Caco-2 (cell line): ENCODE measurements at regions of chr4 and their contacts with region 1.

Region 1: GRCh38 chr4:52750819-52751486 is at the start of gene ERVMER34-1:
- DNase-seq: peak in 1 of 2 experiments; percentile 53
- H3K4me3 ChIP-seq: peak within 1 kb of the TSS; percentile 77
- H3K4me3 Mint-ChIP-seq: peak within 1 kb of the TSS; percentile 98
- H3K27ac Mint-ChIP-seq: peak within 1 kb of the TSS; percentile 91
- H3K4me1 ChIP-seq: peaks cover 8% of the 10 kb centered on the region; the same call in 1 of the 2 replicates
- H3K4me1 Mint-ChIP-seq: peaks cover 10% of the 10 kb centered on the region
- H3K27me3 ChIP-seq: no peaks in the 10 kb centered on the region
- H3K27me3 Mint-ChIP-seq: no peaks in the 10 kb centered on the region
- CTCF ChIP-seq: no peak
- total RNA-seq, gene ERVMER34-1: 73.3 and 85.6 TPM in 2 replicates

Region 2: DNA sequence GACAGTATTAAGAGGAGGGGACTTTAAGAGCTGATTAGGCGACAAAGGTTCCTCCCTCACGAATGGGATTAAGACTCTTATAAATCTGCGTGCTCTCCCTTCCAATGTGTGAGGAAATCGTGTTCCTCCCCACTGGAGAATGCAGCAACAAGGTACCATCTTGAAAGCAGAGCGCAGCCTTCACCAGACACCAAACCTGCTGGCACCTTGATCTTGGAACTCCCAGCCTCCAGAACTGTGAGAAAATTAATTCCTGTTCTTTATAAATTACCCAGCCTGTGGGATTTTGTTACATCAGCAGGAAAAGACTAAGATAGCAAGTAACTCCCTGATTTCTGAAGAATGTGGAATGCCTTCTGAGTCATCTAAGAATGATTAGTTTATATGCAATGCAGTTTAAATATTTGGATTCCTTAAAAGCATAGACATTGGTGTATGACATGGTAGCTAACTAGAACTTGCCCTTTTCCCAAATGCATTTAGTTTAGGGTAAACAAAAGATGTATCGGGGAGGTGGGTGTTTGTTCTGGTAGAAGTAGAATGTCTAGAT is 177.9 kb before region 1 on chr4:
- CTCF ChIA-PET with region 1: no interaction called
- POLR2A ChIA-PET with region 1: no interaction called
- intact Hi-C with region 1: no loop called
- DNase-seq: no peak
- H3K4me3 ChIP-seq: no peak overlapping the region
- H3K4me3 Mint-ChIP-seq: no peak overlapping the region
- H3K27ac Mint-ChIP-seq: no peak overlapping the region
- H3K4me1 ChIP-seq: no peaks in the 10 kb centered on the region
- H3K4me1 Mint-ChIP-seq: peaks cover 6% of the 10 kb centered on the region
- H3K27me3 ChIP-seq: no peaks in the 10 kb centered on the region
- H3K27me3 Mint-ChIP-seq: peaks cover 5% of the 10 kb centered on the region
- CTCF ChIP-seq: no peak

Region 3: GRCh38 chr4:52600275-52600674 is 150.7 kb before region 1 on chr4:
- CTCF ChIA-PET with region 1: no interaction called
- POLR2A ChIA-PET with region 1: interaction called, 11 read pairs
- intact Hi-C with region 1: no loop called
- DNase-seq: no peak
- H3K4me3 ChIP-seq: no peak overlapping the region
- H3K4me3 Mint-ChIP-seq: no peak overlapping the region
- H3K27ac Mint-ChIP-seq: no peak overlapping the region
- H3K4me1 ChIP-seq: no peaks in the 10 kb centered on the region
- H3K4me1 Mint-ChIP-seq: no peaks in the 10 kb centered on the region
- H3K27me3 ChIP-seq: no peaks in the 10 kb centered on the region
- H3K27me3 Mint-ChIP-seq: no peaks in the 10 kb centered on the region
- CTCF ChIP-seq: no peak

Region 4: GRCh38 chr4:52948057-52948423 is 197.1 kb after region 1 on chr4:
- CTCF ChIA-PET with region 1: no interaction called
- POLR2A ChIA-PET with region 1: interaction called, 11 read pairs
- intact Hi-C with region 1: no loop called
- DNase-seq: no peak
- H3K4me3 ChIP-seq: no peak overlapping the region
- H3K4me3 Mint-ChIP-seq: no peak overlapping the region
- H3K27ac Mint-ChIP-seq: no peak overlapping the region
- H3K4me1 ChIP-seq: peaks cover 3% of the 10 kb centered on the region
- H3K4me1 Mint-ChIP-seq: peaks cover 6% of the 10 kb centered on the region
- H3K27me3 ChIP-seq: no peaks in the 10 kb centered on the region
- H3K27me3 Mint-ChIP-seq: no peaks in the 10 kb centered on the region
- CTCF ChIP-seq: no peak

Region 5: DNA sequence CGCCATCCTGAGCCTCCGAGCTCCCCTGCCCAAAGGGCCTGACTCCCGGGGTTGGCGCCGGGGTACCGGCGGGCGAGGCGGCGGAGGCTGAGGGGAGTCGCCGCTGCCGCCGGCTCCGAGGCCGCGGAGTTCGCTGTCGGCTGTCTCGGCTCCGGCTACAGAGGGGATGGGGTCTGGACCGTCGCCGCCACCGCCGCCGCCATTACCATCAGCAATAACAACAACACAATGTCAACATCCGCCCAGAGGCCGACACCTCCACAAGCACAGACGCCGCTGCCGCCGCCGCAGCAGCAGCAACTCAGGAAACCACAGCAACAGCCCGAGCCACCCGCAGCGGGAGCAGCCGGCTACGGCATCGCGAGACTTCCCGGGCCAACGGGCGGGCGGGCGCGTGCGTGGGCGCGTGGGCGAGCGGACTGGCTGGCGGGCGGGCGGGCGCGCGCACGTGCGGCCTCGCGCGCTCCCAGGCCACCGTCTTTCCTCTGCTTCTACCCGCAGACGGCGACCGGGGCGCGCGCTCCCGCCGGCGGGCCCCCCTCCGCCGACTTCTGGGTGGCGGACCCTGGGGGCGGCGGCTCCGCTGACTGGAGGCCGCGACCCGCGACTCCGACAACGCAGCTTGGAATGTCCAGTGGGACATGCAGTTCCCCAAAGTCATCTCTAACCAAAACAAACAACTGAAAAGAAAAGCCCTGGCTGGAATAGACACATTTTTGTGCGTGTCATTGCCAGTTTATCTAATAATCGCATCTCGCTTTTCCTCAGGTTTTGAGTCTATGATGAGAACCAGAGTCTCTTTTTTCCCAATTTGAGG is 1313.5 kb after region 1 on chr4 and contains the start of gene CHIC2:
- CTCF ChIA-PET with region 1: no interaction called
- POLR2A ChIA-PET with region 1: interaction called, 13 read pairs
- intact Hi-C with region 1: no loop called
- DNase-seq: peak; percentile 94 to 96
- H3K4me3 ChIP-seq: peak within 1 kb of the TSS; percentile 92
- H3K4me3 Mint-ChIP-seq: peak within 1 kb of the TSS; percentile 89
- H3K27ac Mint-ChIP-seq: peak within 1 kb of the TSS; percentile 20
- H3K4me1 ChIP-seq: peaks cover 25% of the 10 kb centered on the region
- H3K4me1 Mint-ChIP-seq: peaks cover 40% of the 10 kb centered on the region
- H3K27me3 ChIP-seq: no peaks in the 10 kb centered on the region
- H3K27me3 Mint-ChIP-seq: no peaks in the 10 kb centered on the region
- CTCF ChIP-seq: no peak
- total RNA-seq, gene CHIC2: 24.9 and 30.0 TPM in 2 replicates